ENCODE measurements at regions of chrX and their contacts with region 1.

Region 1: GRCh38 chrX:30889147-30890140 is at the start of gene TAB3:
- DNase-seq: peak; percentile 97
- H3K4me3 Mint-ChIP-seq: peak within 1 kb of the TSS; percentile 88
- H3K27ac Mint-ChIP-seq: peak within 1 kb of the TSS; percentile 94
- H3K4me1 Mint-ChIP-seq: peaks cover 18% of the 10 kb centered on the region
- H3K27me3 Mint-ChIP-seq: peaks cover 2% of the 10 kb centered on the region
- total RNA-seq, gene TAB3: 21.9 and 23.7 TPM in 2 replicates

Region 2: GRCh38 chrX:30659421-30659820 is 230.0 kb before region 1 on chrX:
- intact Hi-C with region 1: loop called (anchors 2 kb)
- DNase-seq: peak; percentile 59
- H3K4me3 Mint-ChIP-seq: peak overlapping the region; percentile 49
- H3K27ac Mint-ChIP-seq: peak overlapping the region; percentile 88
- H3K4me1 Mint-ChIP-seq: peaks cover 35% of the 10 kb centered on the region
- H3K27me3 Mint-ChIP-seq: no peaks in the 10 kb centered on the region

Region 3: GRCh38 chrX:30735839-30736238 is 153.6 kb before region 1 on chrX:
- intact Hi-C with region 1: loop called (anchors 2 kb)
- DNase-seq: peak; percentile 92
- H3K4me3 Mint-ChIP-seq: no peak overlapping the region
- H3K27ac Mint-ChIP-seq: no peak overlapping the region
- H3K4me1 Mint-ChIP-seq: peaks cover 7% of the 10 kb centered on the region
- H3K27me3 Mint-ChIP-seq: no peaks in the 10 kb centered on the region

Region 4: DNA sequence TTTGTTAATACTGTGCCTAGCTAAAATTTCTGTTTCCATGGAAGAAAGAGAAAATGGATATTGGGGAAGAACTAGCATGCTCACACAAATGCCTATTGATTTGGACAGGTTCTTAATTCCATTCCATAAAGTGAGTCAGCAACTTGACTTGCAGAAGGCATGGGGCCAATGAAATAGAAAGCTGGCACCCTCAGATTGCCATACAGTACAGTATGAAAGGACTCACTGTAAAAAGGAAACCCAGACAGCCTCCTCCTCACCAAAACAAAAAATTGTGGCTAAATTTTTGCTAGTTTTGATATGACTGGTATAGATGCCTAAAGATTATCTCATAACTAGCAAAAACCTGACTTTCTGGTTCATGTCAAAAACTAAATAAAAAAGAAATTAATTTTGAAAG is 10.8 kb after region 1 on chrX:
- intact Hi-C with region 1: loop called (anchors 1 kb)
- DNase-seq: no peak
- H3K4me3 Mint-ChIP-seq: no peak overlapping the region
- H3K27ac Mint-ChIP-seq: no peak overlapping the region
- H3K4me1 Mint-ChIP-seq: peaks cover 9% of the 10 kb centered on the region
- H3K27me3 Mint-ChIP-seq: peaks cover 18% of the 10 kb centered on the region

Measured in activated CD4-positive, alpha-beta T cell treated with anti-CD3 and anti-CD28 coated beads, Interleukin-2, amount 10 ng/mL, durations not matched to agents 24 days and 14 days (primary cell).